Cardiac septum (tissue), 1 donor: ENCODE measurements at regions of chr7 and their contacts with region 1.

Region 1: GRCh38 chr7:51067757-51068156 is 248.9 kb downstream of the COBL start:
- DNase-seq: no peak

Region 2: GRCh38 chr7:50653126-50653864 is 414.5 kb before region 1 on chr7:
- intact Hi-C with region 1: loop called (anchors 5 kb)
- DNase-seq: peak; percentile 77

Region 3: DNA sequence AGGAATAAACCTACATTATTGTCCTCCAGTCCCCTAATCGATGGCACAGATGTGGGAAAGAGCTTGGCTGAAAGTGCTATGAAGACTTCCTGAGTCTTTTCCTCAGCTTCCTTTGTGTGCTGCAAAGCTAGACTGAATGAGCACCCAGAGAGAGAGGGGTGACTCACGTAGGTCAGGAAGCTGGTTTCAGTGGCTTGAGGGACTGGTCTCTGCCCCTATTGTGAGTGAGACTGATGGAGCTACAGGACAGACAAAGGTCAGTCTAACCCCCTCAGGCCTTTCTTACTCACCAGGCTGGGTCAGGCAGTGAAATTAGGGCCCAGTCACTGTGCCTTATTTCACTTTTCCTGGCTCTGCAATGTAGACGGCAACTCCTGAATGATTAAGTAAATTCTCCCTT is 113.9 kb before region 1 on chr7:
- intact Hi-C with region 1: loop called (anchors 10 kb)
- DNase-seq: no peak